Calu3 (cell line): ENCODE measurements at regions of chr16 and their contacts with region 1.

Region 1: DNA sequence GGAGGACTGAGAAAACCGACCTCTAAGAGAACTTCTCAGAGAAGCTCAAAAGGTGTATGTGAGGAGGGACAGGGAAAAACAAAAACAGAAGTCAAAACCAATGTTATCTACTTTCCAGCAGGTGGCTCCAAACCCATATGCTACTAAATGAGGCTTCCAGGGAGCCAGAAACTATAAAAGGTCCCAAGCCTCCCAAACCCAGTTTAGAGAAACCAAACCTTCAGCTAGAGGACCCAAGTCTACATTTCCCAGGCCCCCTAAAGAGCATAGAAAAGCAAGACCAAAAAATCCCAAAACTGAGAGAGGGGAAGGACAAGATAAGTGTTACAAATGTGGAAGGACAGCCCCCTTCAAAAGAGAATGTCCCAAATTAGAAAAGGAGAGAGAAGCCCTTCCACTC is 3.7 kb downstream of the HPR start:
- DNase-seq: peak; percentile 10
- H3K4me3 Mint-ChIP-seq: no peak overlapping the region
- H3K27ac Mint-ChIP-seq: no peak overlapping the region
- H3K4me1 Mint-ChIP-seq: no peaks in the 10 kb centered on the region
- H3K27me3 Mint-ChIP-seq: peaks cover 55% of the 10 kb centered on the region
- CTCF ChIP-seq: peak; percentile 54

Region 2: GRCh38 chr16:72099377-72099818 is 32.7 kb after region 1 on chr16:
- CTCF ChIA-PET with region 1: no interaction called
- intact Hi-C with region 1: loop called (anchors 1 kb)
- DNase-seq: peak; percentile 71
- H3K4me3 Mint-ChIP-seq: no peak overlapping the region
- H3K27ac Mint-ChIP-seq: no peak overlapping the region
- H3K4me1 Mint-ChIP-seq: peaks cover 14% of the 10 kb centered on the region
- H3K27me3 Mint-ChIP-seq: no peaks in the 10 kb centered on the region
- CTCF ChIP-seq: peak; percentile 59

Region 3: GRCh38 chr16:72189865-72190371 is 123.2 kb after region 1 on chr16:
- CTCF ChIA-PET with region 1: no interaction called
- intact Hi-C with region 1: no loop called
- DNase-seq: peak; percentile 58
- H3K4me3 Mint-ChIP-seq: no peak overlapping the region
- H3K27ac Mint-ChIP-seq: peak overlapping the region; percentile 86
- H3K4me1 Mint-ChIP-seq: peaks cover 19% of the 10 kb centered on the region
- H3K27me3 Mint-ChIP-seq: no peaks in the 10 kb centered on the region
- CTCF ChIP-seq: no peak